Activated naive CD4-positive, alpha-beta T cell treated with anti-CD3 and anti-CD28 coated beads, Interleukin-2, amount 10 ng/mL, durations not matched to agents 7 days and 5 days (primary cell): ENCODE measurements at regions of chr4 and their contacts with region 1.

Region 1: DNA sequence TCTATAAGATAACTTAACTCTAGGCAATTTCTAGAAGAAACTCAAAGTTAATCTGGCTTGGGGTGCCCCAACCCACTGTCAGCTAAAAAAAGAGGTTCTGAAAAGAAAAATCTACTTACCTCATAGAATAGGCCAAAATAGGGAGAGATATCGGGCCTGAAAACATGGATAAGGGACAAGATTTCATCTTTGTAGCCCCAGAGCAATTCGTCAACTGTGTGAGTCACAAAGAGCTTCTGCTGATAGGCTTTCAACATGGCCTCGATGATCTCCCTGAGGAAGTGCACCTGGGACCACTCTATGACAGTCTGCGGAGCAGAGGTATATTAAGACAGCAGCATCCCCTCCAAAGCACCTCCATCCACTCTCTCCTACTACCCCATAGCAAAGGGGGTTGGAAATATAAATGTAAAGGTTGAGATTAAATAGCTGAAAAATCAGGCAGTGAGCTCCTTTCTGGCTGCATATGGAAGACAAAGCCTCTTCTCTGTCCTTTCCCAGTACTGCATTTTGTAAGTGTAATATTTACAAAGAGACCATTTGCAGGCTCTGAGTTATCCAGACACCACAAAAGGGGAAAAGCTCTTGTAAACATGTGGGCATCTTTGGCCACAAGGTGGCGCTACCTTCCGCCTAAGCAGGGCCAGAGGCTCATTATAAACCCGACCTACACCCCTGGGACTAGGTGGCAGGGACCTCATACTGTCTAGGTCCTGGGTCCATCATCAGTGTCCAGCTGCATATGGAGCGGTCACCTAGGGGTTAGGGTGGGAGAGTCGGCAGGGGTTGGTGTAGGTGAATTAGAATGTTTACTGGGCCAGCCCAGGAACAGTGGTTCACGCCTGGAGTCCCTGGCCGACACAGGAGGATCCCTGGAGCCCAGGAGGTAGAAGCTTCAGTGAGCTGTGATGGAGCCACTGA is 31.5 kb upstream of the NUP54 start:
- DNase-seq: peak; percentile 88
- H3K4me3 Mint-ChIP-seq: no peak overlapping the region
- H3K27ac Mint-ChIP-seq: no peak overlapping the region
- H3K4me1 Mint-ChIP-seq: no peaks in the 10 kb centered on the region
- H3K27me3 Mint-ChIP-seq: no peaks in the 10 kb centered on the region

Region 2: GRCh38 chr4:76035141-76035540 is 144.5 kb before region 1 on chr4:
- CTCF ChIA-PET with region 1: no interaction called
- DNase-seq: no peak
- H3K4me3 Mint-ChIP-seq: no peak overlapping the region
- H3K27ac Mint-ChIP-seq: no peak overlapping the region
- H3K4me1 Mint-ChIP-seq: no peaks in the 10 kb centered on the region
- H3K27me3 Mint-ChIP-seq: no peaks in the 10 kb centered on the region

Region 3: GRCh38 chr4:76168688-76169087 is 11.0 kb before region 1 on chr4:
- CTCF ChIA-PET with region 1: interaction called, 18 read pairs
- DNase-seq: no peak
- H3K4me3 Mint-ChIP-seq: no peak overlapping the region
- H3K27ac Mint-ChIP-seq: no peak overlapping the region
- H3K4me1 Mint-ChIP-seq: no peaks in the 10 kb centered on the region
- H3K27me3 Mint-ChIP-seq: no peaks in the 10 kb centered on the region

Region 4: DNA sequence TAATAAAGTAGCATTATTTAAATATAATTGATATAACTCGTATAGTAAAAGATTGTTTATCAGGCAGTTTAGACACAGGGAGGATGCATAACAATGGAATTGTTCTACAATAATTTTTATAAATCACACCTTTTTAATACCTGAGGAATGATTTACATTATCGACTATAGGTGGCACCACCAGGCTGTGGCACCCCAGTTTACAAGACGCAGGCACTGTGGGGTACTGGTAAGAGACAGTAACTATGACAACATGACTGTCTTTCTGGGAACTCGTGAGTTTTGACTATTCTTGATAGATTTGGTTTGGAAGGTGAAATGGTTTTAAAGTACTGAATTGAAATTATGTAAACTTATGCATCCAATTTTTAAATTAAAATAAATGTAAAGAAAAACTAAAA is 99.8 kb after region 1 on chr4:
- CTCF ChIA-PET with region 1: interaction called, 12 read pairs
- DNase-seq: peak; percentile 32
- H3K4me3 Mint-ChIP-seq: no peak overlapping the region
- H3K27ac Mint-ChIP-seq: no peak overlapping the region
- H3K4me1 Mint-ChIP-seq: no peaks in the 10 kb centered on the region
- H3K27me3 Mint-ChIP-seq: peaks cover 29% of the 10 kb centered on the region

Region 5: DNA sequence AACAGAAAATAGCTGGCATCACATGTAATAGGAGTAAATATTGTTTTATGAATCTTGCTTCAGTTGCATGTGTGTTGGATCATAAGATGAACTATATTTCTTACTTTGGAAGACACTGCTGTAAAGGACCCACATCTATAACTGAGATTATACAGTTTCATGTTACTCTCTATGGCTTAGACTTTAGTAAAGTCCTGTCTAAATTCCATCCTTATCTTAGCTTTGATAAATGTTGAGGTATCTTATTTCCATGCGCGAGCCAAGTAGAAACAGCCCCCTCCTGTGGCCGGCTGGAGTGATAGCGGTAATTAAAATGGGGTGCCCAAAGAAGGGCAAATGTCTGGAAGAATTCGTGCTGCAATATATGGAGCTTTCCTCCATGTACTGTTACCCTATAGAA is 198.3 kb after region 1 on chr4:
- CTCF ChIA-PET with region 1: interaction called, 205 read pairs
- DNase-seq: peak; percentile 66
- H3K4me3 Mint-ChIP-seq: no peak overlapping the region
- H3K27ac Mint-ChIP-seq: no peak overlapping the region
- H3K4me1 Mint-ChIP-seq: no peaks in the 10 kb centered on the region
- H3K27me3 Mint-ChIP-seq: peaks cover 14% of the 10 kb centered on the region